ENCODE measurements at regions of chr11 and their contacts with region 1.

Region 1: DNA sequence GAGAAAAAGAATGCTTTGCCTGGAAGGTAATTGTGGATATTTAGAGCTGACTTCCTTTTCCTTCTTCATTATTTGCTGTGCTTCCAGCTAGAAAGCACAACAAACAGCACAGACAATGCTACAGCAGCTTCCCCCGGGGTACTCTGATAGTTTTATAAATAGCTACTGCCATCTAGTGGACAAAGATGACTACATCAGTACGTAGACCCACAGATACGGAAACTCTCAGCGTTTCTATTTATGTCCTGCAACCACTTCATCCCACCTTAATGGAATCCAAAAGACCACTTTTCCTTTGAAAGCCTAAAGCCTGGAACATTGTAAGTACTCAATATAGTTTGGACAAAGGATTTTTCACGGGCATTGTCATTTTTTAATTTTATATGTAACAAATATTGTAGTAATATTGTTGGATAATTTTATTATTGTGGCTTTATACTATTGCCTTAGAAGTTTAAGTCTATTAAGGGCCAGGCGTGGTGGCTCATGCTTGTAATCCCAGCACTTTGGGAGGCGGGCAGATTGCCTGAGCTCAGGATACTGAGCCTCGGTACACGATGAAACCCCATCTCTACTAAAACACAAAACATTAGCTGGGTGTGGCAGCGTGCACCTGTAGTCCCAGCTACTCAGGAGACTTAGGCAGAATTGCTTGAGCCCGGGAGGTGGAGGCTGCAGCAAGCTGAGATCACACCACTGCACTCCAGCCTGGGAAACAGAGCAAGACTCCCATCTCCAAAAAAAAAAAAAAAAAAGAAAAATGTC is 7.5 kb downstream of the HSPA8 start:
- DNase-seq: peak; percentile 67 to 82 (median 80)
- H3K4me3 ChIP-seq: no peak overlapping the region
- H3K27ac ChIP-seq: no peak overlapping the region
- H3K4me1 ChIP-seq: peaks cover 2 to 19% (median 14%) of the 10 kb centered on the region in 4 experiments
- H3K27me3 ChIP-seq: no peaks in the 10 kb centered on the region

Region 2: GRCh38 chr11:122863704-122864326 is 190.7 kb before region 1 on chr11:
- CTCF ChIA-PET with region 1: interaction called, 33 read pairs
- POLR2A ChIA-PET with region 1: interaction called, 3 read pairs
- DNase-seq: peak; percentile 50 to 72 (median 66)
- H3K4me3 ChIP-seq: peak overlapping the region in 1 of 7 experiments; percentile 55
- H3K27ac ChIP-seq: no peak overlapping the region
- H3K4me1 ChIP-seq: peaks cover 4 to 10% (median 8%) of the 10 kb centered on the region in 4 experiments
- H3K27me3 ChIP-seq: no peaks in the 10 kb centered on the region

Region 3: GRCh38 chr11:123020968-123021367 is 33.5 kb before region 1 on chr11:
- CTCF ChIA-PET with region 1: interaction called, 55 read pairs
- POLR2A ChIA-PET with region 1: no interaction called
- DNase-seq: peak; percentile 66 to 83 (median 80)
- H3K4me3 ChIP-seq: no peak overlapping the region
- H3K27ac ChIP-seq: no peak overlapping the region
- H3K4me1 ChIP-seq: peaks cover 0 to 5% (median 0%) of the 10 kb centered on the region in 4 experiments
- H3K27me3 ChIP-seq: no peaks in the 10 kb centered on the region

Region 4: DNA sequence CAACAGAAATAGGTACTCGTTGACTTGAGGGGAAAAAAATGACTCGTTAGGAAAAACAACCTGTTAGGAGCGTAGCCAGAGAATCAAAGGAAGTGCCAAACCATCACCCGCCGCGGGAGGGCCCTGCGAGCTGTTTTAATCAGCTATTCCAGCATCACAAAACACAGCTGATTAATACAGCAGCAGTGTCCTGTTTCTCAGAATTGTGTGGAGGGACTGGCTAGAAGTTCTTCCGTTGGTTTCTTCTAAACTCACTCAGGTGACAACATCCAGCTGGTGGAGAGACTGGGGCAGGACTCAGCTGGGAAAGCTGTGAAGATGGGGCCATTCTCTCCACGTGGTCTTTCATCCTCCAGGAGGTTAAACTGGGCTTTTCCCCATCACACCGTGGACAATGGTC is 20.6 kb before region 1 on chr11:
- CTCF ChIA-PET with region 1: interaction called, 18 read pairs
- POLR2A ChIA-PET with region 1: no interaction called
- DNase-seq: peak in 1 of 3 donors; percentile 19
- H3K4me3 ChIP-seq: no peak overlapping the region
- H3K27ac ChIP-seq: no peak overlapping the region
- H3K4me1 ChIP-seq: no peaks in the 10 kb centered on the region
- H3K27me3 ChIP-seq: no peaks in the 10 kb centered on the region

Region 5: GRCh38 chr11:123039605-123040432 is 14.7 kb before region 1 on chr11:
- CTCF ChIA-PET with region 1: interaction called, 52 read pairs
- POLR2A ChIA-PET with region 1: no interaction called
- DNase-seq: no peak
- H3K4me3 ChIP-seq: no peak overlapping the region
- H3K27ac ChIP-seq: no peak overlapping the region
- H3K4me1 ChIP-seq: no peaks in the 10 kb centered on the region
- H3K27me3 ChIP-seq: no peaks in the 10 kb centered on the region

Region 6: DNA sequence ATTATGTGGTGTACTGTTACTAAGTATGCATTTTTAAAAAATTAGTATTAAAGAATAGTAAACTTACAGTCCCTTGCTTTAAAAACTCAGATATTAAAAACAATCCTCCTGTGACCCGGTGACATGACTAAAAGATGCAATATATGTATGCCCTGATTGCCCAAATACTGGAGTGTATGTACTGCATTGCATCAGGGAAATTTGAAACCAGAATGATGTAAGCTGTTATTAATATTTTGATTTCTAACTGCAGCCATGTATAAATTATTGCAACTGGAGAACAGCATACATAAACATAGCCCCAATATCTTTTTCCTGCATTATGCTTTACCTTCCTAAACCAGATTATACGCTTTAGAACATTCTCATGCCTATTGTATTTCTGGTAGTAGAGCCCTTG is 11.2 kb after region 1 on chr11:
- CTCF ChIA-PET with region 1: interaction called, 16 read pairs
- POLR2A ChIA-PET with region 1: no interaction called
- DNase-seq: no peak
- H3K4me3 ChIP-seq: no peak overlapping the region
- H3K27ac ChIP-seq: no peak overlapping the region
- H3K4me1 ChIP-seq: peaks cover 15 to 49% (median 27%) of the 10 kb centered on the region in 4 experiments
- H3K27me3 ChIP-seq: no peaks in the 10 kb centered on the region

Measured in common myeloid progenitor, CD34-positive (primary cell).